ENCODE measurements at regions of chr1 and their contacts with region 1.

Region 1: GRCh38 chr1:182446033-182446669 is 3.8 kb upstream of the RGSL1 start:
- DNase-seq: peak in 1 of 2 experiments; percentile 53
- H3K4me3 ChIP-seq: no peak overlapping the region
- H3K4me3 Mint-ChIP-seq: no peak overlapping the region
- H3K27ac Mint-ChIP-seq: no peak overlapping the region
- H3K4me1 ChIP-seq: no peaks in the 10 kb centered on the region
- H3K4me1 Mint-ChIP-seq: no peaks in the 10 kb centered on the region
- H3K27me3 ChIP-seq: no peaks in the 10 kb centered on the region
- H3K27me3 Mint-ChIP-seq: no peaks in the 10 kb centered on the region
- CTCF ChIP-seq: peak; percentile 62 to 77

Region 2: GRCh38 chr1:182806015-182806678 is 360.0 kb after region 1 on chr1:
- CTCF ChIA-PET with region 1: no interaction called
- POLR2A ChIA-PET with region 1: no interaction called
- intact Hi-C with region 1: loop called (anchors 5 kb)
- DNase-seq: peak; percentile 47 to 50
- H3K4me3 ChIP-seq: no peak overlapping the region
- H3K4me3 Mint-ChIP-seq: no peak overlapping the region
- H3K27ac Mint-ChIP-seq: no peak overlapping the region
- H3K4me1 ChIP-seq: no peaks in the 10 kb centered on the region
- H3K4me1 Mint-ChIP-seq: no peaks in the 10 kb centered on the region
- H3K27me3 ChIP-seq: no peaks in the 10 kb centered on the region
- H3K27me3 Mint-ChIP-seq: no peaks in the 10 kb centered on the region
- CTCF ChIP-seq: peak in 1 of 2 experiments; percentile 38